ENCODE measurements at regions of chr6 and their contacts with region 1.

Region 1: GRCh38 chr6:37353761-37354525 is at the start of gene RNF8:
- DNase-seq: peak; percentile 96
- ATAC-seq: peak; percentile 99
- H3K4me3 Mint-ChIP-seq: peak within 1 kb of the TSS; percentile 92
- H3K27ac Mint-ChIP-seq: peak within 1 kb of the TSS; percentile 84
- H3K4me1 Mint-ChIP-seq: peaks cover 20% of the 10 kb centered on the region
- H3K27me3 Mint-ChIP-seq: no peaks in the 10 kb centered on the region
- total RNA-seq, gene RNF8: 20.6 to 23.8 TPM

Region 2: DNA sequence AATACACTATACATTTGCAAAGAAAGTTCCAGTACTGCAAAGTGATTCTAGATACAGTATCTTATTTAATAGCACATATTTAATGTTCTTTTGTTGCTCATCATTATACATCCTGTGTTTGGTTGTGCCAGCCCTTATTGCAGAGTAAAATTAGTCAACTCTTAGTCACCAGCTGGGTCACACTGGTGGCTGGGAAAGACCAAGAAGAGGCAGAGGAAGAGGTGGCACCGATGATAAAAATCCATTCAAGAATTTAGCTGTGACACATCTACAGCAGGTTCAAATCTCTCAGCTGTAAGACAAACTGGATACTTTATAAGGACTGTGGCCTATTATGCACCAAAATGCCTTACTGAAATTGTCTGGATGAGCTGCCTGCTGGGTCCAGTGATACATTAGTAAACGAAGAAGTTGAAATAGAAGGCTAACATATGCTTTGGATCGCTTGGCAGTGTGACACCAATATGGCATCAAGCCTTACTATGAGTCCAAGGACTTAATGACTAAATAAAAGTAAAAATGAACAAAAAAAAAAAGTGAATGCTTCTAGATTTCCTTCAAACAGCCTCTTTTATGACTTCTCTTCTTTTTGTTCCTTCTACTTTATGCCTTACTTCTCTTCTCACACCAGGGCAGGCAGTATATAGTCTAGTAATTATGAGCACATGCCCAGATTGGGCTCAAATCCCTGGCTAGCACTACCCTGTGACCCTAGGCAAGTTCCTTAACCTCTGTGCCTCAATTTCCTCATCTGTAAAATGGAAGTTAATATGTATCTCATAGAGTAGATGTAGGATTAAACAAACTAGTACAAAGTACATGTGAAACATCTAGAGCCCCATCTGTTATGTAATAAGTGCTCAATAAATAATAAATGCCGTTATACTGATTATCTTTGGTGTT is 29.6 kb before region 1 on chr6:
- CTCF ChIA-PET with region 1: interaction called, 11 read pairs
- POLR2A ChIA-PET with region 1: no interaction called
- intact Hi-C with region 1: no loop called
- DNase-seq: peak; percentile 62
- ATAC-seq: peak; percentile 91
- H3K4me3 Mint-ChIP-seq: no peak overlapping the region
- H3K27ac Mint-ChIP-seq: peak overlapping the region; percentile 39
- H3K4me1 Mint-ChIP-seq: peaks cover 23% of the 10 kb centered on the region
- H3K27me3 Mint-ChIP-seq: no peaks in the 10 kb centered on the region

Region 3: DNA sequence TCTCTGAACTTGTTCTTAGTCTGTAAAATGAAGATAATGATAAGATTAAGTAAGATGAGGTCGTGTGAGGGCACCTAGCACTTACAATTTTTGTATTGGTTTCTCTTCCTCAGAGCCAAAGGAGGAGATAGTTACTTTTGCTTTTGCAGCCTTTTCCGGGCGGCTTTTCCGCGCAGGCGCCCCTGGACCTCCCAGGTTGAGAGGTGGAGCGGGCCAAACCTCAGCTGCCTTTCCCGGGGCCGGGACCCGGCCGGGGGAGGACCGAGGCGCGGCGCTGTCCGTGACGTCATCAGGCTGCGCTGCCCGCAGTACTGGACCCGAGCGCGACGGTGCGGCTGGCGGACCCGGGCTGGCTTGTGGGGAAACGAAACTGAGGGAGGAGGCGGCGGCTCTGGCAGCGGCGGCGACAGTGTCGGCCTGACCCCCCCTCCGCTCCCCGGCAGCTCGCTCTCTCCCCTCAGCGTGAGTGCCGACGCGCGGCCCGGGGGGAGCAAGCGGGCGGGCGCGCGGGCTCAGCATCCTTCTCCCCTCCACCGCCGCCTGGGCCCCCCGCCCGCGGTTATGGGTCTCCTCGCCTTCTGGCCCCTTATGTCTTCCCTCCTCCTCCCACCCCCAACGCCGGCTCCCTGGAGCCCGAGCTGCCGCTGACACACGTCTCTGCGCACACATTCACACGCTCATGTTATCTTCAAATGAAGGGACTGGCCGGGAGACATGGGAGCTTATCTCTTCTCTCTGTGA is 79.1 kb after region 1 on chr6 and contains the start of gene CMTR1:
- CTCF ChIA-PET with region 1: no interaction called
- POLR2A ChIA-PET with region 1: interaction called, 3 read pairs
- intact Hi-C with region 1: loop called in 1 of 2 experiments (anchors 1 kb)
- DNase-seq: peak; percentile 98
- ATAC-seq: peak; percentile 88
- H3K4me3 Mint-ChIP-seq: peak within 1 kb of the TSS; percentile 98
- H3K27ac Mint-ChIP-seq: peak within 1 kb of the TSS; percentile 99
- H3K4me1 Mint-ChIP-seq: peaks cover 36% of the 10 kb centered on the region
- H3K27me3 Mint-ChIP-seq: peaks cover 4% of the 10 kb centered on the region
- total RNA-seq, gene CMTR1: 65.3 to 74.6 TPM

Measured in activated CD4-positive, alpha-beta T cell treated with anti-CD3 and anti-CD28 coated beads for 36 hours (primary cell).